ENCODE measurements at regions of chr11 and their contacts with region 1.

Region 1: DNA sequence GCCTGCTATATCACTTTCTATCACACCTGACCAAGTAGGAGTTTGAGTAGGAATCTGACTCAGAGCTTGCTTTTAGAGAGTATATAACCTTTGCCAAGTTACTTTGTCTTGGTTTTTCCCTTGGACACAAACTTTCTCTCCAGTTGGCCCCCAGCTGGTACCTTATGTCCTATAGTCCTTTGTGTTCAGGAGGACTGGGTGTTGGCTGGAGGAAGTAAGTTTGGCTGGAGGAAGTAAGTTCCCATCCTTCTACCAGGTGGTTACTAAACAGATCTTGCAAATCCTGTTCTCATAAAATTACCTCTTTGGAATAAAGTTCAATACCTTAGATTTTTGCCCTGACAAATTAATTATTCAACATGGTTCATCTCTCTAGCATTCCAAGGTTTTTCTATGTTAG is 37.2 kb downstream of the SPON1 start:
- DNase-seq: no peak
- ATAC-seq: no peak
- H3K4me3 ChIP-seq: no peak overlapping the region
- H3K27ac ChIP-seq: no peak overlapping the region
- H3K4me1 ChIP-seq: no peaks in the 10 kb centered on the region
- H3K27me3 ChIP-seq: no peaks in the 10 kb centered on the region; a peak in 1 of 4 replicates
- CTCF ChIP-seq: no peak
- EP300 ChIP-seq: no peak
- POLR2A ChIP-seq: no peak
- RAD21 ChIP-seq: no peak

Region 2: DNA sequence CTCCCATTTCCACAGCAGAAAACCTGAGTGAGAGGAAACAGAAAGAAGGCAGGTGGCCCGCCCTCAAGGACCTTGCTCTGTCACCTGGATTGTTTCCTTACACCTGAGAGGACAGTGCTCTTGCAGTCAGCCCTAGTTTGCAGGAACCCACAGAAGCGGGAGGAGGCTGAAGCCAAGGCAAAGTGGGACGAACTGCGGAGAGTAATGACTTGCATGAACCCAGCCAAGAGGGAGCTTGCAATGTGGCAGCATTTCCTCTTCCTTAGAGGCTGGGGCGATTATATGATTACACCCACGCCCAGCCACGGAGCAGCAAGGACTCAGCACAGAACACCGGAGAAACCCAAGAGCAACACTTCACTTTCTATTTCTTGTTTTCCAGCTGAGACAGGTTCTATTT is 65.4 kb after region 1 on chr11:
- CTCF ChIA-PET with region 1: no interaction called
- POLR2A ChIA-PET with region 1: no interaction called
- RAD21 ChIA-PET with region 1: no interaction called
- SMC1A ChIA-PET with region 1: no interaction called
- in situ Hi-C with region 1: no loop called
- intact Hi-C with region 1: loop called (anchors 10 kb)
- DNase-seq: no peak
- ATAC-seq: no peak
- H3K4me3 ChIP-seq: no peak overlapping the region
- H3K27ac ChIP-seq: no peak overlapping the region
- H3K4me1 ChIP-seq: no peaks in the 10 kb centered on the region
- H3K27me3 ChIP-seq: no peaks in the 10 kb centered on the region; a peak in 1 of 4 replicates
- CTCF ChIP-seq: no peak
- EP300 ChIP-seq: no peak
- POLR2A ChIP-seq: no peak
- RAD21 ChIP-seq: no peak

Measured in GM12878 (cell line).